ENCODE measurements at regions of chr3 and their contacts with region 1.

Region 1: GRCh38 chr3:150515210-150515609 is 31.1 kb downstream of the SERP1 start:
- DNase-seq: no peak
- ATAC-seq: no peak
- H3K4me3 ChIP-seq: no peak overlapping the region
- H3K4me3 Mint-ChIP-seq: no peak overlapping the region
- H3K27ac ChIP-seq: no peak overlapping the region
- H3K27ac Mint-ChIP-seq: no peak overlapping the region
- H3K4me1 ChIP-seq: no peaks in the 10 kb centered on the region
- H3K4me1 Mint-ChIP-seq: no peaks in the 10 kb centered on the region
- H3K27me3 ChIP-seq: peaks cover 0 to 7% of the 10 kb centered on the region in 2 experiments
- H3K27me3 Mint-ChIP-seq: peaks cover 4 to 8% of the 10 kb centered on the region in 2 donors

Region 2: GRCh38 chr3:150309557-150309956 is 205.7 kb before region 1 on chr3:
- CTCF ChIA-PET with region 1: no interaction called
- POLR2A ChIA-PET with region 1: interaction called in 1 of 2 experiments, 13 read pairs
- DNase-seq: no peak
- ATAC-seq: no peak
- H3K4me3 ChIP-seq: no peak overlapping the region
- H3K4me3 Mint-ChIP-seq: no peak overlapping the region
- H3K27ac ChIP-seq: no peak overlapping the region
- H3K27ac Mint-ChIP-seq: no peak overlapping the region
- H3K4me1 ChIP-seq: no peaks in the 10 kb centered on the region
- H3K4me1 Mint-ChIP-seq: no peaks in the 10 kb centered on the region
- H3K27me3 ChIP-seq: peaks cover 0 to 5% of the 10 kb centered on the region in 2 experiments
- H3K27me3 Mint-ChIP-seq: peaks cover 21 to 29% of the 10 kb centered on the region in 2 donors

Measured in T-cell (primary cell).